ENCODE measurements at regions of chr7 and their contacts with region 1.

Region 1: GRCh38 chr7:92528188-92528957 is at the starts of genes PEX1 and RBM48:
- DNase-seq: peak; percentile 79 to 98 (median 96)
- ATAC-seq: peak; percentile 96
- H3K4me3 ChIP-seq: peak within 1 kb of the TSS; percentile 95
- H3K4me3 Mint-ChIP-seq: peak within 1 kb of the TSS; percentile 86 to 96 (median 90)
- H3K27ac ChIP-seq: peak within 1 kb of the TSS; percentile 91
- H3K27ac Mint-ChIP-seq: peak within 1 kb of the TSS; percentile 91 to 100 (median 95)
- H3K4me1 ChIP-seq: peaks cover 13 to 23% of the 10 kb centered on the region in 2 donors
- H3K4me1 Mint-ChIP-seq: peaks cover 24 to 67% (median 52%) of the 10 kb centered on the region in 7 donors
- H3K27me3 ChIP-seq: no peaks in the 10 kb centered on the region
- H3K27me3 Mint-ChIP-seq: peaks cover 0 to 2% (median 0%) of the 10 kb centered on the region in 5 donors
- total RNA-seq, gene PEX1: 18.6 to 43.3 (median 25.6) TPM
- total RNA-seq, gene RBM48: 16.9 to 42.7 (median 37.8) TPM

Region 2: GRCh38 chr7:91089382-91089963 is 1438.9 kb before region 1 on chr7:
- CTCF ChIA-PET with region 1: no interaction called
- POLR2A ChIA-PET with region 1: no interaction called
- intact Hi-C with region 1: loop called in 1 of 2 experiments (anchors 5 kb)
- DNase-seq: peak in 6 of 9 donors; percentile 33 to 52 (median 38)
- ATAC-seq: peak; percentile 78
- H3K4me3 ChIP-seq: no peak overlapping the region
- H3K4me3 Mint-ChIP-seq: peak overlapping the region; percentile 2 to 71 (median 43)
- H3K27ac ChIP-seq: no peak overlapping the region
- H3K27ac Mint-ChIP-seq: peak overlapping the region in 4 of 9 donors; percentile 0 to 29 (median 12)
- H3K4me1 ChIP-seq: peaks cover 0 to 12% of the 10 kb centered on the region in 2 donors
- H3K4me1 Mint-ChIP-seq: peaks cover 14 to 36% (median 29%) of the 10 kb centered on the region in 7 donors
- H3K27me3 ChIP-seq: no peaks in the 10 kb centered on the region
- H3K27me3 Mint-ChIP-seq: peaks cover 0 to 9% (median 0%) of the 10 kb centered on the region in 5 donors

Region 3: GRCh38 chr7:92245487-92246362 is 282.6 kb before region 1 on chr7 and contains the starts of genes ANKIB1 and KRIT1:
- CTCF ChIA-PET with region 1: no interaction called
- POLR2A ChIA-PET with region 1: interaction called, 4 read pairs
- intact Hi-C with region 1: loop called (anchors 1 kb)
- DNase-seq: peak; percentile 68 to 88 (median 86)
- ATAC-seq: peak; percentile 87
- H3K4me3 ChIP-seq: peak within 1 kb of the TSS; percentile 80
- H3K4me3 Mint-ChIP-seq: peak within 1 kb of the TSS; percentile 97 to 100 (median 98)
- H3K27ac ChIP-seq: peak within 1 kb of the TSS; percentile 92
- H3K27ac Mint-ChIP-seq: peak within 1 kb of the TSS; percentile 98 to 100 (median 100)
- H3K4me1 ChIP-seq: peaks cover 15 to 22% of the 10 kb centered on the region in 2 donors
- H3K4me1 Mint-ChIP-seq: peaks cover 30 to 64% (median 45%) of the 10 kb centered on the region in 7 donors
- H3K27me3 ChIP-seq: no peaks in the 10 kb centered on the region
- H3K27me3 Mint-ChIP-seq: no peaks in the 10 kb centered on the region
- total RNA-seq, gene ANKIB1: 54.8 to 98.6 (median 68.2) TPM
- total RNA-seq, gene KRIT1: 45.7 to 78.7 (median 48.6) TPM

Region 4: DNA sequence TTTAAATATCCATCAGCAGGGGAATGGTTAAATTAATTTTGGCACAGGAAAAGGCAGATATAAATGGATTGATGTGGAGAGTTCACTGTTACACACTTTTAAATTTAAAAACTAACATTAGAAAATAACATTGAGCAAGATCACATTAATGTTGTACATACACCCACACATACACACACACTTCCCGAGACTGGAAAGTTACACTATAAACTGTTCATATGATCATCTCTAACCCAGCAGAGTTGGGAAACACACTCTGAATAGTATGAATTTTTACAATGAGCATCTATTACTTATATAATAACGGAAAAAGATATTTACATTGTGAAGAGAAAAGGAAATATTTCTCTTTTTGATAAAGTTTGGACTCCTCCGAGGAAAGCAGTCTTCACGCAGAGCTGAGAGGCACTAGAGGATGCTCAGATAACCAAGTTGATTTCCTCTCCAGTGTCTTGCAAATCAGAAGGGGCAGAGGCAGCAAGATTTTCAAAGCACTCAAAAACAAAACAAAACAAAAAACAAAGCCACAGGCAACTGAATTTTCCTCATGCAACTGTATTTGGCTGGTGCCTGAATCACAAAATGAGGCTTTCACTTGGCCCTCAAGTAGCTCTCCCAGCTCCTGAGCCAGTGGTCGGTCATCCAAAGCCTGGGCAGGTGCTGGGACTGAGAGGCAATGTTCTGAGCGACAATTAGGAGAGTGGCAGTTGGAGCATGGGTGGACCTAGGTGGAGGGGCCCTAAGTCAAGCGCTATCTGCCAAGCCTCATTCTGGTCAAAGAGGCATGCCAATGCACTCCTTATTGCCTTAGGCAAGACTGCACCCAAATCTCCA is 91.5 kb before region 1 on chr7:
- CTCF ChIA-PET with region 1: no interaction called
- POLR2A ChIA-PET with region 1: no interaction called
- intact Hi-C with region 1: no loop called
- DNase-seq: no peak
- ATAC-seq: no peak
- H3K4me3 ChIP-seq: no peak overlapping the region
- H3K4me3 Mint-ChIP-seq: no peak overlapping the region
- H3K27ac ChIP-seq: no peak overlapping the region
- H3K27ac Mint-ChIP-seq: no peak overlapping the region
- H3K4me1 ChIP-seq: no peaks in the 10 kb centered on the region
- H3K4me1 Mint-ChIP-seq: peaks cover 0 to 5% (median 0%) of the 10 kb centered on the region in 7 donors
- H3K27me3 ChIP-seq: no peaks in the 10 kb centered on the region
- H3K27me3 Mint-ChIP-seq: peaks cover 0 to 12% (median 0%) of the 10 kb centered on the region in 5 donors

Region 5: GRCh38 chr7:92590711-92591310 is 62.4 kb after region 1 on chr7:
- CTCF ChIA-PET with region 1: interaction called, 3 read pairs
- POLR2A ChIA-PET with region 1: interaction called, 20 read pairs
- intact Hi-C with region 1: loop called (anchors 1 kb)
- DNase-seq: peak in 1 of 9 donors; percentile 11
- ATAC-seq: no peak
- H3K4me3 ChIP-seq: peak overlapping the region; percentile 77
- H3K4me3 Mint-ChIP-seq: peak overlapping the region; percentile 90 to 96 (median 94)
- H3K27ac ChIP-seq: peak overlapping the region; percentile 94
- H3K27ac Mint-ChIP-seq: peak overlapping the region in 8 of 9 donors; percentile 22 to 96 (median 76)
- H3K4me1 ChIP-seq: peaks cover 14 to 21% of the 10 kb centered on the region in 2 donors
- H3K4me1 Mint-ChIP-seq: peaks cover 27 to 46% (median 39%) of the 10 kb centered on the region in 7 donors
- H3K27me3 ChIP-seq: no peaks in the 10 kb centered on the region
- H3K27me3 Mint-ChIP-seq: peaks cover 0 to 4% (median 0%) of the 10 kb centered on the region in 5 donors

Region 6: GRCh38 chr7:92904292-92905131 is 376.1 kb after region 1 on chr7:
- CTCF ChIA-PET with region 1: no interaction called
- POLR2A ChIA-PET with region 1: no interaction called
- intact Hi-C with region 1: loop called in 1 of 2 experiments (anchors 2 kb)
- DNase-seq: peak in 8 of 9 donors; percentile 21 to 80 (median 42)
- ATAC-seq: peak; percentile 99
- H3K4me3 ChIP-seq: no peak overlapping the region
- H3K4me3 Mint-ChIP-seq: peak overlapping the region in 1 of 10 donors; percentile 44
- H3K27ac ChIP-seq: no peak overlapping the region
- H3K27ac Mint-ChIP-seq: peak overlapping the region in 2 of 9 donors; percentile 39 to 83
- H3K4me1 ChIP-seq: peaks cover 0 to 7% of the 10 kb centered on the region in 2 donors
- H3K4me1 Mint-ChIP-seq: peaks cover 0 to 23% (median 12%) of the 10 kb centered on the region in 7 donors
- H3K27me3 ChIP-seq: no peaks in the 10 kb centered on the region
- H3K27me3 Mint-ChIP-seq: peaks cover 0 to 5% (median 0%) of the 10 kb centered on the region in 5 donors

Region 7: DNA sequence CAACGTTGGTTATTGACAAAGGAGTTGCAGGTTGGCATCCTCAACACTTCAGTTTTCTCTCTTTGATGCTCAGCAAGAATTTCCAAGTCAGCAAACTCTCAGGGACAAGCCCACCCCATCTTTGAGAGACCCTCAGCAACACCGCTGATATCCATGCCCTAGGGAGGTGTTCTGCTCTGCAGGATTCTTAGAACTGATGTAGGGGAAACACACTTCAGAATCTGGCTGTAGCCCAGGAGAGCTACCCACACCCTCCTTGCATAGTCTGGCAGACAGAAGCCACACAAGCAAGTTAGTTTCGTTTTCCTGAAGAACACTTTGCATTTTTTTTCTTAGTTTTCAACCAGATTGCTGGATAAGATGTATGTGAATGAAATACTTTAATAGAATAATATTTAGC is 619.0 kb after region 1 on chr7:
- CTCF ChIA-PET with region 1: no interaction called
- POLR2A ChIA-PET with region 1: no interaction called
- intact Hi-C with region 1: loop called (anchors 2 kb)
- DNase-seq: peak in 8 of 9 donors; percentile 30 to 51 (median 39)
- ATAC-seq: peak; percentile 76
- H3K4me3 ChIP-seq: peak overlapping the region; percentile 68
- H3K4me3 Mint-ChIP-seq: peak overlapping the region; percentile 84 to 98 (median 94)
- H3K27ac ChIP-seq: peak overlapping the region; percentile 69
- H3K27ac Mint-ChIP-seq: peak overlapping the region; percentile 86 to 96 (median 92)
- H3K4me1 ChIP-seq: peaks cover 13 to 21% of the 10 kb centered on the region in 2 donors
- H3K4me1 Mint-ChIP-seq: peaks cover 29 to 51% (median 36%) of the 10 kb centered on the region in 7 donors
- H3K27me3 ChIP-seq: no peaks in the 10 kb centered on the region
- H3K27me3 Mint-ChIP-seq: no peaks in the 10 kb centered on the region